Activated T-helper 1 cell treated with anti-CD3 and anti-CD28 coated beads, Interleukin-12 subunit alpha, Interleukin-12 subunit beta, Interleukin-2, Interleukin-4 antibody, amounts not matched to agents 30 ng/mL and 10 ng/mL and 1 ng/mL, durations not matched to agents 14 hours and 24 hours and 36 hours (primary cell): ENCODE measurements at regions of chr16 and their contacts with region 1.

Region 1: DNA sequence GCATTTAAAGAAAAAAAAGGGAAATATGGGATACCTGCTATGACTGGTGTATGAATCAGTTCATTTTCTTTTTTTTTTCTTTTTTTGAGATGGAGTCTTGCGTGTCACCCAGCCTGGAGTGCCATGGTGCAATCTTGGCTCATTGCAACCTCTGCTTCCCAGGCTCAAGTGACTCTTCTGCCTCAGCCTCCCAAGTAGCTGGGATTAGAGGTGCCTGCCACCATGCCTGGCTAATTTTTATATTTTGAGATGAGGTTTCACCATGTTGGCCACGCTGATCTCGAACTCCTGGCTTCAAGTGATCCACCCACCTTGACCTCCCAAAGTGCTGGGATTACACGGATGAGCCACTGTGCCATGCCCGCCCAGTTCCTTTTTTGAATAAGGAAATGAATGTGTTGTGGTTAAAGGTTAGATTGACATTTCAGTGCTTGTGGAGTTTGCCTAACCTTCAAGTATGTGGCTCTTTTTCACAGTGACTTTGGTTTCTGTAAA is 7.7 kb downstream of the HAPSTR1 start:
- DNase-seq: no peak
- H3K4me3 Mint-ChIP-seq: peak overlapping the region; percentile 45
- H3K27ac Mint-ChIP-seq: peak overlapping the region; percentile 46
- H3K4me1 Mint-ChIP-seq: peaks cover 87% of the 10 kb centered on the region
- H3K27me3 Mint-ChIP-seq: no peaks in the 10 kb centered on the region

Region 2: DNA sequence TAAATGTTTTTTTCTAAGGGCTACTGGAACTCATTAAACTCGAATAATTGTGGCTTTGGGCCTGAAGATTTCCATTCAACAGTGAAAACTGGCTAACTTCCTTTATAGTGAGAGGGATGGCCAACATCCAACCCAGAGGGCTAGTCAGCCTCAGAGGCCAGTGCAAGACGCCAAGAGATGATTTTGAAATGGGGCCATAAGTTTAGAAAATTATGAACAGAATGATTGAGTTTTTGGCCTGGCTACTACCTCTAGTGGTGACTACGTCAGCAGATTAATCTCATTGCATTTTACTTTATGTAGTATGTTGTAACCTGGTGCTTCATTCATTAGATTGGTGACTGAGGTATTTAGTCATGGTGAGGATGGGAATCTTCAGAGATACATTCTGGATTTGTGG is 20.6 kb after region 1 on chr16:
- intact Hi-C with region 1: loop called (anchors 2 kb)
- DNase-seq: no peak
- H3K4me3 Mint-ChIP-seq: no peak overlapping the region
- H3K27ac Mint-ChIP-seq: no peak overlapping the region
- H3K4me1 Mint-ChIP-seq: peaks cover 49% of the 10 kb centered on the region
- H3K27me3 Mint-ChIP-seq: no peaks in the 10 kb centered on the region

Region 3: DNA sequence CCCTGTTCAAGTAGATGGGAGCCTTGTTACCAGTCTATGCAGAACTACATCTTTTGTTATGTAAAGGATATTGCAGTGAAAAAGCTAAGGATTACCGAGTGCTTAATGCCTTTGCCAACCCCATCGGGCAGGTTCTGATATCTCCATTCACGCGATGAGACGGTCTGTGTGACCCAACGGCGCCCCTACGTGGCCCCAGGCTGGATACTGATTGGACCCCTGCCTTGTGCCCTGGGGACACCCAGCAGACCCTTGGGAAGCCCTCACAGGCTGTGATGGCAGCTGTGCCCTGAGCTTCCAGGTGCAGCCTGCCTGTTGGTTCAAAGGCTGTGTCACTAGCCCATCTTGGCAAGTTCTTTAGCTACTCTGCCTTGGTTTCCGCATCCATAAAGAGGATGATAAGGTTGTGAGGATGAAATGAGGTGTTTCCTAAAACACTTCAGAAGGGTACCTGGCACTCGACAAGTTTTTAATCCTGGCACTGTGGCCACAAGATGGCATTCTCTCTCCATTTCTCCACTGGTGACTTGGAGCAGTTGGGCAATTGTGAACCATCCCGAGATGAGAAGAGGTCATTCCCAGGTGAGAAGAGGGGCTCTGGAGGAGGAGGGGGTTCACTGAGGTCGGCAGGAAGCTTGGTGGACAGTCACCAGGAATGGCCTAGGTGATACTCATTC is 25.9 kb after region 1 on chr16:
- intact Hi-C with region 1: loop called (anchors 2 kb)
- DNase-seq: no peak
- H3K4me3 Mint-ChIP-seq: no peak overlapping the region
- H3K27ac Mint-ChIP-seq: peak overlapping the region; percentile 14
- H3K4me1 Mint-ChIP-seq: peaks cover 52% of the 10 kb centered on the region
- H3K27me3 Mint-ChIP-seq: no peaks in the 10 kb centered on the region